CD14-positive monocyte (primary cell): ENCODE measurements at regions of chr2 and their contacts with region 1.

Region 1: DNA sequence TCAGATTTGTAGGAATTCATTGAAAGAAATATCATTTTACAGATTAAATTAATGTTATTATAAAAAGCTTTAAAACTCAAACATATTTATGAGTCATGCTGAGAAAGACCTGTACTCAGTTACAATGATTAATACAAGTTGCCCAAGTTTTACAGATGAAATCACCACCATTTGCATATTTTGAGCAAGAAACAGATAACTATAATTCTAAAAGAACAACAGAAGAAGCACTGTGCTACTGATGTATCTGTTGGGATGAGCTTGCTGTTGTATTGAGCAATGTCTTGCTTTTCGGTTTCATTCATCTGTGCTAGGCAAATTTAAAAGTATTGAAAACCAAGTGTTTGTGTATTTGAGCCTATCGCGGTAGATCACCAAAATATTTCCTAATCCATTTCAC is 1589.1 kb upstream of the ZEB2 start:
- DNase-seq: no peak
- H3K4me3 ChIP-seq: no peak overlapping the region
- H3K4me3 Mint-ChIP-seq: no peak overlapping the region
- H3K27ac ChIP-seq: no peak overlapping the region
- H3K27ac Mint-ChIP-seq: no peak overlapping the region
- H3K4me1 ChIP-seq: no peaks in the 10 kb centered on the region
- H3K4me1 Mint-ChIP-seq: no peaks in the 10 kb centered on the region
- H3K27me3 ChIP-seq: no peaks in the 10 kb centered on the region
- H3K27me3 Mint-ChIP-seq: no peaks in the 10 kb centered on the region
- CTCF ChIP-seq: no peak

Region 2: GRCh38 chr2:146124741-146125140 is 15.7 kb after region 1 on chr2:
- intact Hi-C with region 1: loop called in 1 of 2 experiments (anchors 1 kb)
- DNase-seq: no peak
- H3K4me3 ChIP-seq: no peak overlapping the region
- H3K4me3 Mint-ChIP-seq: no peak overlapping the region
- H3K27ac ChIP-seq: no peak overlapping the region
- H3K27ac Mint-ChIP-seq: no peak overlapping the region
- H3K4me1 ChIP-seq: no peaks in the 10 kb centered on the region
- H3K4me1 Mint-ChIP-seq: no peaks in the 10 kb centered on the region
- H3K27me3 ChIP-seq: no peaks in the 10 kb centered on the region
- H3K27me3 Mint-ChIP-seq: no peaks in the 10 kb centered on the region
- CTCF ChIP-seq: no peak

Region 3: GRCh38 chr2:146193619-146194018 is 84.6 kb after region 1 on chr2:
- intact Hi-C with region 1: no loop called
- DNase-seq: no peak
- H3K4me3 ChIP-seq: no peak overlapping the region
- H3K4me3 Mint-ChIP-seq: no peak overlapping the region
- H3K27ac ChIP-seq: no peak overlapping the region
- H3K27ac Mint-ChIP-seq: no peak overlapping the region
- H3K4me1 ChIP-seq: no peaks in the 10 kb centered on the region
- H3K4me1 Mint-ChIP-seq: no peaks in the 10 kb centered on the region
- H3K27me3 ChIP-seq: no peaks in the 10 kb centered on the region
- H3K27me3 Mint-ChIP-seq: no peaks in the 10 kb centered on the region
- CTCF ChIP-seq: no peak